HCT116 (cell line): ENCODE measurements at regions of chr15 and their contacts with region 1.

Region 1: GRCh38 chr15:48253172-48253571 is 47.1 kb downstream of the SLC12A1 start:
- DNase-seq: no peak
- ATAC-seq: no peak
- H3K4me3 ChIP-seq: no peak overlapping the region
- H3K27ac ChIP-seq: no peak overlapping the region
- H3K4me1 ChIP-seq: no peaks in the 10 kb centered on the region
- H3K27me3 ChIP-seq: peaks cover 3% of the 10 kb centered on the region; the same call in 1 of the 2 replicates
- CTCF ChIP-seq: no peak
- POLR2A ChIP-seq: no peak
- RAD21 ChIP-seq: no peak

Region 2: GRCh38 chr15:48062148-48062861 is 190.9 kb before region 1 on chr15:
- CTCF ChIA-PET with region 1: no interaction called
- POLR2A ChIA-PET with region 1: no interaction called
- RAD21 ChIA-PET with region 1: no interaction called
- intact Hi-C with region 1: no loop called
- DNase-seq: no peak
- ATAC-seq: no peak
- H3K4me3 ChIP-seq: no peak overlapping the region
- H3K27ac ChIP-seq: no peak overlapping the region
- H3K4me1 ChIP-seq: no peaks in the 10 kb centered on the region
- H3K27me3 ChIP-seq: no peaks in the 10 kb centered on the region
- CTCF ChIP-seq: no peak
- POLR2A ChIP-seq: no peak
- RAD21 ChIP-seq: no peak

Region 3: GRCh38 chr15:48279608-48280007 is 26.4 kb after region 1 on chr15:
- CTCF ChIA-PET with region 1: no interaction called
- POLR2A ChIA-PET with region 1: no interaction called
- RAD21 ChIA-PET with region 1: no interaction called
- intact Hi-C with region 1: loop called (anchors 2 kb)
- DNase-seq: no peak
- ATAC-seq: no peak
- H3K4me3 ChIP-seq: no peak overlapping the region
- H3K27ac ChIP-seq: no peak overlapping the region
- H3K4me1 ChIP-seq: no peaks in the 10 kb centered on the region
- H3K27me3 ChIP-seq: peaks cover 27% of the 10 kb centered on the region
- CTCF ChIP-seq: no peak
- POLR2A ChIP-seq: no peak
- RAD21 ChIP-seq: no peak

Region 4: DNA sequence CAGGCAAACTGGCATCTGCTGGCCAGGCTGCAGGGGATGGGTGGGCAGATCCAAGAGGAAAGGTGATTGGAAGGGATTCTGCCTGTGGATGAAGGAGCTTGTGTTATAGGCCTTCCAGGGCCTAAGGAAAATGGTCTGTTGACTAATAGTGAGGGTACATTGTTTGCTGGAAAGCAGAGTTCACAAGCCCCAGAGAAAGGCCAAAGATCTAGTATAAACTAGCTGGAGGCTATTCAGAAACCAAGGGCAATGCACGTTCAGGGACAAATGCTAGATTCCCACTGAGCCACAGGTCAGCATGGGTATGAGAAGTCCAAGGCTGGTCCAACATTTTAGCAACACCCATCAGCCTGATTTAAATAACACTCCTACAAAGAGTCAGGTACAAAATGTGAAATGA is 317.6 kb after region 1 on chr15:
- CTCF ChIA-PET with region 1: no interaction called
- POLR2A ChIA-PET with region 1: no interaction called
- RAD21 ChIA-PET with region 1: no interaction called
- intact Hi-C with region 1: no loop called
- DNase-seq: no peak
- ATAC-seq: no peak
- H3K4me3 ChIP-seq: no peak overlapping the region
- H3K27ac ChIP-seq: no peak overlapping the region
- H3K4me1 ChIP-seq: peaks cover 0 to 4% of the 10 kb centered on the region in 2 experiments; a peak in 1 of 4 replicates
- H3K27me3 ChIP-seq: no peaks in the 10 kb centered on the region
- CTCF ChIP-seq: no peak
- POLR2A ChIP-seq: no peak
- RAD21 ChIP-seq: no peak